ENCODE measurements at regions of chr10 and their contacts with region 1.

Region 1: GRCh38 chr10:98028168-98028770 is 2.2 kb downstream of the CRTAC1 start:
- H3K4me3 ChIP-seq: no peak overlapping the region
- H3K27ac ChIP-seq: no peak overlapping the region
- H3K4me1 ChIP-seq: no peaks in the 10 kb centered on the region; the same call in 1 of the 2 replicates
- CTCF ChIP-seq: peak; percentile 85

Region 2: GRCh38 chr10:97914837-97915211 is 113.4 kb before region 1 on chr10:
- CTCF ChIA-PET with region 1: interaction called, 18 read pairs
- POLR2A ChIA-PET with region 1: no interaction called
- H3K4me3 ChIP-seq: no peak overlapping the region
- H3K27ac ChIP-seq: no peak overlapping the region
- H3K4me1 ChIP-seq: no peaks in the 10 kb centered on the region
- CTCF ChIP-seq: peak; percentile 91

Region 3: GRCh38 chr10:97936126-97936525 is 92.1 kb before region 1 on chr10:
- CTCF ChIA-PET with region 1: no interaction called
- POLR2A ChIA-PET with region 1: no interaction called
- H3K4me3 ChIP-seq: no peak overlapping the region
- H3K27ac ChIP-seq: no peak overlapping the region
- H3K4me1 ChIP-seq: no peaks in the 10 kb centered on the region
- CTCF ChIP-seq: no peak

Region 4: GRCh38 chr10:98006266-98006665 is 22.0 kb before region 1 on chr10:
- CTCF ChIA-PET with region 1: interaction called, 10 read pairs
- POLR2A ChIA-PET with region 1: no interaction called
- H3K4me3 ChIP-seq: no peak overlapping the region
- H3K27ac ChIP-seq: no peak overlapping the region
- H3K4me1 ChIP-seq: peaks cover 3% of the 10 kb centered on the region; the same call in 1 of the 2 replicates
- CTCF ChIP-seq: no peak

Region 5: GRCh38 chr10:98013122-98013521 is 15.1 kb before region 1 on chr10:
- CTCF ChIA-PET with region 1: interaction called, 25 read pairs
- POLR2A ChIA-PET with region 1: interaction called, 8 read pairs
- H3K4me3 ChIP-seq: no peak overlapping the region
- H3K27ac ChIP-seq: no peak overlapping the region
- H3K4me1 ChIP-seq: no peaks in the 10 kb centered on the region
- CTCF ChIP-seq: no peak

Region 6: DNA sequence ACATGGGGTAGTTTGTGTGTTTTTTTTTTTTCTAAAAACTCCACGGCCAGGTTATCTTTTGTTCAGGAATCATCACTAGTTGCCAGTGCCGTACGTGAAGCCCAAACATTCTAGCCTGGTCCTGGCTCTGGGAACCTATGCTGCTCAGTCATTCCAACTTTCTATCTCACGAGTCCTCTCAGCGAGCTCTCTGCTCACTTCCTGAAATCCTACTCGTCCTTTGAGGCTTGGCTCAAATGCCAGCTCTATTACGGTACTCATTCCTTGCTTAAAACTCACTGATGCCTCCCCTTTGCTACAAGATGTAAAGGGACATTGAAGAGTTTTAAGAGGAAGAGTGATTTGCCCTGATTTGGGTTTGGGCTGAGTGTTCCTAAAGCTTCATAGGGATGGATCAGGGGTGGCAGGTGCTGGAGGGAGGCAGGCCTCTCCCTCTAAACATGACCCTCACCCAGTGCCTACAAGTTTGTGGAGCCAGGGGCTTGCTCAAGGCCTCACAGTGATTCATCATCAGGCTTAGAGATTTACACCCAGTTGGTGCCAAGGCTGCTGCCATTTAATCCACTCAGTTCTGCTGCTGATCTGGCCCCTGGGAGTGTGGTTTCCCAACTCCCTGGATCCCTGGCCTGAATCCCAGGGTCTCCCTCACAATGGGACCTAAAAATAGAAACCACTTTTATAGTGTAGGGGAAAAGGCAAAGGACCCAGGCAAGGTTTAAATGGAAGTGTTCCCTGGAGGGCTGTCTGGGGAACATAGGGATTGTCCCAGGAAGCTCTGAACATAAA is 60.1 kb after region 1 on chr10:
- CTCF ChIA-PET with region 1: no interaction called
- POLR2A ChIA-PET with region 1: no interaction called
- H3K4me3 ChIP-seq: no peak overlapping the region
- H3K27ac ChIP-seq: no peak overlapping the region
- H3K4me1 ChIP-seq: no peaks in the 10 kb centered on the region
- CTCF ChIP-seq: no peak

Region 7: GRCh38 chr10:98323221-98324164 is 295.2 kb after region 1 on chr10:
- CTCF ChIA-PET with region 1: no interaction called
- POLR2A ChIA-PET with region 1: no interaction called
- H3K4me3 ChIP-seq: no peak overlapping the region
- H3K27ac ChIP-seq: no peak overlapping the region
- H3K4me1 ChIP-seq: no peaks in the 10 kb centered on the region
- CTCF ChIP-seq: no peak